ENCODE measurements at regions of chr2 and their contacts with region 1.

Region 1: DNA sequence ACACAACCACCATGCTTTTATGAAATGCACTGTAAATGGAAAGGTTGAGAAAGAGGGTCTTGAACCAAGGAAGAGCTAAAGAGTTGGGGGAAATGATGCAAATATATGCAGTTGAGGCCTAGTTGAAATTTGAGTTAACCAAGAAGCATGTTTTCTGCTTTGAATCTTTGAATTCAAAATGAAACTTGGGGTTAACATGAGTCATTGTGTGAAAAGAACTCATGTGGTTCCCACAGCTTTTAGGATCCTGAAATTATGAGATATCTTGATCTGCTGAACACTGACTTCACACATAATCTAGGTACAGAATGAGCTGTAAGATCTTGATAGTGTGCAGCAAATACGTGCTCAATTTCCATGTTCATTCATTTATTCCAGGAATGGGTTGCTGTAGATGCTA is 422.9 kb upstream of the TRIB2 start:
- DNase-seq: peak; percentile 80
- H3K4me3 Mint-ChIP-seq: peak overlapping the region; percentile 34
- H3K27ac Mint-ChIP-seq: peak overlapping the region; percentile 82
- H3K4me1 Mint-ChIP-seq: peaks cover 46% of the 10 kb centered on the region
- H3K27me3 Mint-ChIP-seq: peaks cover 10% of the 10 kb centered on the region

Region 2: GRCh38 chr2:11829947-11830707 is 463.7 kb before region 1 on chr2:
- intact Hi-C with region 1: loop called (anchors 1 kb)
- DNase-seq: peak; percentile 89
- H3K4me3 Mint-ChIP-seq: peak overlapping the region; percentile 73
- H3K27ac Mint-ChIP-seq: peak overlapping the region; percentile 85
- H3K4me1 Mint-ChIP-seq: peaks cover 37% of the 10 kb centered on the region
- H3K27me3 Mint-ChIP-seq: peaks cover 37% of the 10 kb centered on the region

Region 3: GRCh38 chr2:12032975-12033374 is 260.9 kb before region 1 on chr2:
- intact Hi-C with region 1: no loop called
- DNase-seq: no peak
- H3K4me3 Mint-ChIP-seq: no peak overlapping the region
- H3K27ac Mint-ChIP-seq: no peak overlapping the region
- H3K4me1 Mint-ChIP-seq: no peaks in the 10 kb centered on the region
- H3K27me3 Mint-ChIP-seq: peaks cover 14% of the 10 kb centered on the region

Region 4: GRCh38 chr2:12192762-12193161 is 101.1 kb before region 1 on chr2:
- intact Hi-C with region 1: loop called (anchors 10 kb)
- DNase-seq: peak; percentile 71
- H3K4me3 Mint-ChIP-seq: peak overlapping the region; percentile 62
- H3K27ac Mint-ChIP-seq: peak overlapping the region; percentile 66
- H3K4me1 Mint-ChIP-seq: peaks cover 14% of the 10 kb centered on the region
- H3K27me3 Mint-ChIP-seq: peaks cover 3% of the 10 kb centered on the region

Region 5: DNA sequence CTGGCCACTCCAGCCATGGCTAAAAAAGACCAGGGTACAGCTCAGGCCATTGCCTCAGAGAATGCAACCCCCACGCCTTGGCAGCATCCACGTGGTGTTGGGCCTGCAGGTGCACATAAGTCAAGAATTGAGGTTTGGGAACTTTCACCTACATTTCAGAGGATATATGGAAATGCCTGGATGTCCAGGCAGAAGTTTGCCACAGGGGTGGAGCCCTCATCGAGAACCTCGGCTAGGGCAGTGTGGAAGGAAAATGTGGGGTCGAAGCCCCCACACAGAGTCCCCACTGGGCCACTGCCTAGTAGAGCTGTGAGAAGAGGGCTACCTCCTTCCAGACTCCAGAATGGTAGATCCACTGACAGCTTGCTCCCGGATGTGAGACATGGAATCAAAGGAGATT is 70.1 kb before region 1 on chr2:
- intact Hi-C with region 1: no loop called
- DNase-seq: no peak
- H3K4me3 Mint-ChIP-seq: no peak overlapping the region
- H3K27ac Mint-ChIP-seq: no peak overlapping the region
- H3K4me1 Mint-ChIP-seq: no peaks in the 10 kb centered on the region
- H3K27me3 Mint-ChIP-seq: peaks cover 6% of the 10 kb centered on the region

Region 6: DNA sequence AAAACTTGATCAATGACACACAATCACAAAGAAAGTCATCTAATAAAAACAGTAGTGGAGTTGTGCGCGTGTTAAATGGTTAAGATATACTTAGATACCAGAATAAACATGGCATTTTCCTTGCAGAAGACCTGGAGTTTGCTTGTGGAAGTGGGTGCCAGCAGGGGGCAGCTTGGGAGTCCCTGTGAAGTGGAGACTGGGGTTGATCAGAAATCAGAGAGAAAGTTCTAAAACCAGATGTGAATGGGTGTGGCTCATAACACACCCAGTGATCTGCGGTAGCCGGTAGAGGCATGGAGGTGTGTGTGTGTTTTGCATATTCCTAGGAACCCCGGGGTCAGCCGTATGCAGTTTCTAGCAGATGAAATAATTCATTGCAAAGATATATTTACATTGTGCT is 122.7 kb after region 1 on chr2:
- intact Hi-C with region 1: loop called (anchors 5 kb)
- DNase-seq: peak; percentile 86
- H3K4me3 Mint-ChIP-seq: peak overlapping the region; percentile 4
- H3K27ac Mint-ChIP-seq: peak overlapping the region; percentile 25
- H3K4me1 Mint-ChIP-seq: peaks cover 54% of the 10 kb centered on the region
- H3K27me3 Mint-ChIP-seq: no peaks in the 10 kb centered on the region

Region 7: DNA sequence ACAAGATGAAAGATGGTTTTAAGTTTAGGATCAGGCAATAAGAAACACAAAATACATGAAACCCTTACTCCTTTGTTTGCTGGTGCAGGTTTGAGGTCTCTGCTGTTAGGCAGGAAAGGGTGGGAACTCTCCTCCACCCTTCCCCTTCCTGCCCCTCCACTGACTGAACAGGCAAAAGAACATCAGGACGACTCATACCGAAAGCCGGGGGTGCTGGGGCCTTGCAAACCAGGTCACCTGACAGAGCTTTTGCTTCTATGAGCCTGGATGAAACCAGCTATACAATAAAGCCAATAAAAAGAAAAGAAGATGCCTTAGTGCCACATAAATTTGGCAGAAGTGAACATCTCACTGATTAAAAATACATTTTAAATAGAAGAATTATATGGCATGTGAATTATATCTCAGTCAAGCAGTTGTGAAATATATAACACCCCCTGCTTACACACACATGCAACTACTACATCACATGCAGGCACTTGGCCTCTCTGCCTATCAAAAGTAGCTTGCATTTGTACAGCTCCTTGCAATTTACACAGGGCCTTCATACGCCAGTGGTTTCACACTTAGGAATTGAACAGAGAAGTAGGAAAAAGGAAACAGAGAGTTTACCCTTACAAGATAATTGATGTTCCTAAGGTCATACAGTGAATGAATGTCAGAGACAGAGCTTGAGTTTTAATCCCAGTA is 207.7 kb after region 1 on chr2:
- intact Hi-C with region 1: loop called (anchors 1 kb)
- DNase-seq: peak; percentile 94
- H3K4me3 Mint-ChIP-seq: peak overlapping the region; percentile 65
- H3K27ac Mint-ChIP-seq: peak overlapping the region; percentile 84
- H3K4me1 Mint-ChIP-seq: peaks cover 86% of the 10 kb centered on the region
- H3K27me3 Mint-ChIP-seq: no peaks in the 10 kb centered on the region

Region 8: DNA sequence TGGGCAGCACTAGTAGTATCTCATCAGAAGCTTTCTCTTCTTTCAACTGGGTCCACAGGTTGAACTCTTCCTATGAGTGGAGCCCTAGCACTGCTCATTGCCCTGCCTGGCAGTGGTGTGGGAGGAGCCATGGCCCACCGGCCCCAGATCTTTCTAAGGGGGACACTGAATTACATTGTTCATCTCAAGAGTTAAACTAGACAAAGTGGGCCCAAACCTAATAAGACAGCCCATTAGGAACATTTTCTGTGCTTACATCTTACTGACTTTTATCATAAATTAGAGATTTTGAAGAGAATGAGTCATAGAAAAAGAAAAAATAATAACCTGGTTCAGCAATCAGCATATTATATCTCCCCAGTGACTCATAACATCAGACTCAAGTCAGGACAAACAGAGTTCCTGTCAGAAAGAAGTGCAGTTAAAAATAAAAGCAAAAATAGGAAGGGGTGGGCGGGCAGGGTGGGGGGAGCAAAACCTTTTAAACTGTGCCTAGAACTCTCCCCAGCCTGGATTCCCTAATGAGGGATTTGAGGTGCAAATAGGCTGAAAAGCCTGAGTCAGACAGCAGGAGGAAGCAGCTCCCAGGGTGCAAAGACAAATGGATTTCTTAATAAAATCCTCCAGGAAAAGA is 261.3 kb after region 1 on chr2:
- intact Hi-C with region 1: loop called (anchors 1 kb)
- DNase-seq: peak; percentile 59
- H3K4me3 Mint-ChIP-seq: peak overlapping the region; percentile 57
- H3K27ac Mint-ChIP-seq: peak overlapping the region; percentile 88
- H3K4me1 Mint-ChIP-seq: peaks cover 39% of the 10 kb centered on the region
- H3K27me3 Mint-ChIP-seq: no peaks in the 10 kb centered on the region

Measured in activated CD4-positive, alpha-beta T cell treated with anti-CD3 and anti-CD28 coated beads, Interleukin-2, amount 10 ng/mL, durations not matched to agents 24 days and 14 days (primary cell).